ENCODE measurements at regions of chr1 and their contacts with region 1.

Region 1: DNA sequence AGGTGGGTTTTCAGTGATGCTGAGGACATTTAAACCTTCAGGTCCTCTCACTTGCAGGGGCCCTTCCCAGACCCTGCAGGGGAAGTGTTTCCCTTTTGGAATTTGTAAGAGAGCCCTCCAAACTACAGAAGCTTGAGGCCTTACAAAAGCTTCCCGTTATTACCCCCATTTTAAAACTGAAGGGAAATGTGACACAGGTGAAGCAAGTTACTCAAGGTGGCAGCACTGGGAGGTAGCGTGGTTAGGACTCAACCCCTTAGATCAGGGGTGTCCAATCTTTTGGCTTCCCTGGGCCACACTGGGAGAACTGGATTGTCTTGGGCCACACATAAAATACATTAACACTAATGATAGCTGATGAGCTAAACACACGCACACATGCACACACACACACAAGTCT is 15.9 kb upstream of the ZC3H12A start:
- DNase-seq: no peak
- H3K4me3 ChIP-seq: no peak overlapping the region
- H3K27ac ChIP-seq: no peak overlapping the region
- H3K4me1 ChIP-seq: no peaks in the 10 kb centered on the region; a peak in 1 of 4 replicates
- H3K27me3 ChIP-seq: no peaks in the 10 kb centered on the region
- CTCF ChIP-seq: no peak
- EP300 ChIP-seq: no peak
- RAD21 ChIP-seq: no peak

Region 2: GRCh38 chr1:37474046-37474759 is 15.7 kb after region 1 on chr1 and contains the start of gene ZC3H12A:
- CTCF ChIA-PET with region 1: interaction called, 170 read pairs
- POLR2A ChIA-PET with region 1: interaction called, 3 read pairs
- DNase-seq: peak; percentile 98
- H3K4me3 ChIP-seq: peak within 1 kb of the TSS; percentile 82 to 94
- H3K27ac ChIP-seq: peak within 1 kb of the TSS; percentile 60 to 96
- H3K4me1 ChIP-seq: peaks cover 66% of the 10 kb centered on the region in 2 experiments
- H3K27me3 ChIP-seq: no peaks in the 10 kb centered on the region
- CTCF ChIP-seq: no peak
- EP300 ChIP-seq: no peak
- RAD21 ChIP-seq: no peak
- polyA plus RNA-seq, gene ZC3H12A: 7.4 and 8.9 TPM in 2 replicates

Measured in SK-N-SH (cell line).